Right ventricle myocardium inferior (tissue), 1 donor: ENCODE measurements at regions of chr17 and their contacts with region 1.

Region 1: DNA sequence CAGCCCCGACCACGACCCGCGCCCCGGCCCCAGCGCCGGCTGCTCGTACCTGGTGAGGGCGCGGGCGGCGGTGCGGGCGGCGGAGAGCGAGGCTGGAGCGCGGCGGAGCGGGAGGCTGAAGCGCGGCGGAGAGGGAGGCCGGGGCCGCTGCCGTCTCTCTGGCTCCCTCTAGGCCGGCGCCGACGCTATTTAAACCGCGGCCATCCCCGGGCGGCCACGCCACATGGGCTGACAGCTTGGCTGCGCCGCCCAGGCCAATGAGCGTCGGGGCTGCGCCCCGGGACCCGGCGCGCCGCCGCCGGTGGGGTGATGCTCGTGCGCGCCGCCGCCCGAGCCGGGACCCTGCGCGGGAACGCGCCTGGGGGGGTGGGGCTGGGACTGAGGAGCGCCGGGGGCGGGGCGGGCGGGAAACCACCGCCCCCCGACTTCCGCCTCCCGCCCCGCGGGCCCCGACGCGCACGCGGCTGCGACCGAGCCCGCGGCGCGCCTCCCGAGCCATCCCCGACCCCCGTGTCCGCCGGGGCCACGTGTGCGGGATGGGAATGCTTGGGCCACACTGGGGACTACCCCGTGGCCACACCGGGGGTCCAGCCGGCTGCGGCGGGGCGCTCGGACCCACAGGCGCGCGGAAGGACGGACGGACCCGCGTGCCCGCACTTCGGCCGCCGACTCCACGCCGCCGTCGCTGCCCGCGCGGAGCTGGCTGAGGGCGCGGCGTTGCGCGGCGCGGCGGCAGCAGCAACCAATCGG is at the start of gene FASN:
- DNase-seq: peak; percentile 96
- ATAC-seq: peak; percentile 86
- total RNA-seq, gene FASN: 46.6 TPM

Region 2: DNA sequence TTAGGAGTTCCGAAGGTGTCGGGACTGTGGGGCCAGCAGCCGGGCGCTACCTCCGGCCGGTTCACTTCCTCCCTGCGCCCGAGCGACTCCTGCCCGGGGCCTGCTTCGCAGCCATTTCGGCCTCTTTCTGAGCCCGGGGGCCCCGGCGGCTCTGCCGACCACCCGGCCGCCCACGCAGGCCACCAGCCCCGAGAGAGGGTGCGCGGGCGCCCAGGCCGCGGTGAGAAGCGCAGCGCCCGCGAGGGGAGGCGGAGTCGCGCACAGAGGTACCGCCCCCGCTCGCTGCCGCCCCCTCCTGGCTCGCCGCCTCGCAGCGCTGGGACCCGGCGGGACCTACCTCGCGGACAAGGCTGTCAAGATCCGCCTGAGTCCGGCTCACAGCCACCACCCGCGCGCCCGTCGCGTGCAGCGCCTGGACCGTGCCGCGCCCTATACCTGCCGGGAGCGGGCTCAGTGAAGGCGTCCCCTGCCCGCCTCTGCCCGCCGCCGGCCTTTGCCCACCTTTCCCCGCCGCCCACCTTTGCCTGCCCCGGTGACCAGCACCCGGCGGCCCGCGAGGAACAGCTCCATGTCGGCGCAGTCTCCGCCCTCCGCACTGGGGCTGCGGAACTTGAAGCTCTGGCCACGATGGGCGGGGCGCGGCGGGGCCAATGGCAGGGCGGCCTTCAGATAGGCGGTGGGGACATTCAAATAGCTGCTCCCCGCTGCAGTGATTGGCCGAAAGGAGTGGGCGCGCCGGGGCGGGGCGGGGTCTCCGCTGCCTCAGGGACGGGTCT is 60.9 kb before region 1 on chr17 and contains the start of gene DCXR:
- intact Hi-C with region 1: loop called (anchors 1 kb)
- DNase-seq: peak; percentile 99
- ATAC-seq: peak; percentile 98
- total RNA-seq, gene DCXR: 175 TPM

Region 3: DNA sequence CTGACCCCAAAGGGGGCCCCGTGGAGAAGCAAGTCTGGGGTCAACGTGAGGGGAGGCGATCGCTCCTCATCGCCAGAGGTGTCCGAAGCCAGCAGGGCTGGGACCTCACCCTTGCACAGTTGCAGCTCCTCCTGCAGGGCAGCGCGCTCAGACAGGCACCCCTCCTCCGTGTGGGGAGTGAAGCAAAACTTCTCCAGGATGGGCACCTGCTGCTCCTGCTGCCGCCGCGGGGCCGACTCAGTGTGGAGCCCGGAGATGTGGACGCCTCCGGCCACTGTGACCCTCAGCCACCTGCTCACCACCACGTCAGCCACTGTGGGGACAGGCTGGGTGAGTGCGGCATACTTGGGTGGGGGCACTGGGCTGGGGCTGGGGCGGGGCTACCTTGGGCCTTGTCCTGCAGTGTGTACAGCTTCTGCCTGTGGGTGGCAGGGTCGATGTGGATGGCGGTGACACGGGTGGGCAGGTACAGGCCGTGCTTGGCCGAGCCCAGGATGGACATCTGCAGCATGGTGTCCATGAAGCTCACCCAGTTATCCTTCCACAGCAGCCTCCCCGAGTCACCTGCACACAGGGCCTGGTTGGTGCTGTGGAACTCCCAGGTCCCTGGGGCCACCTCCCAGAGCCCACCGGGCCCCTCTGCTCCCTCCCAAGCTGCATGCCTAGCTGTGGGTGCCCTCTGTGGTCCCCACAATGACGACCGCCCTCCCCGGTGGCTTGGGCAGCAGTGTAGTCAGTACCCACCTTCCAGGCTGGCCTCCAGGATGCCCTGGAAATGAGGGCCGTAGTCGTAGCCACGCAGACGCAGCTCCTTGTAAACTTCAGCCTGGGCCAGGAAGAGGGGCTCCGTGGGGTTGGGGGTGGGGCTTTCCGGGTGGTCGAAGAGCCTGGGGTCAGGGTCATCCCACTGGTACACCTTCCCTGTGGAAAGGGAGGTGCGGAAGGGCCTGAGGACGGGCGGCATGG is 11.0 kb before region 1 on chr17:
- intact Hi-C with region 1: no loop called
- DNase-seq: peak; percentile 45
- ATAC-seq: no peak